ENCODE measurements at regions of chr22 and their contacts with region 1.

Region 1: DNA sequence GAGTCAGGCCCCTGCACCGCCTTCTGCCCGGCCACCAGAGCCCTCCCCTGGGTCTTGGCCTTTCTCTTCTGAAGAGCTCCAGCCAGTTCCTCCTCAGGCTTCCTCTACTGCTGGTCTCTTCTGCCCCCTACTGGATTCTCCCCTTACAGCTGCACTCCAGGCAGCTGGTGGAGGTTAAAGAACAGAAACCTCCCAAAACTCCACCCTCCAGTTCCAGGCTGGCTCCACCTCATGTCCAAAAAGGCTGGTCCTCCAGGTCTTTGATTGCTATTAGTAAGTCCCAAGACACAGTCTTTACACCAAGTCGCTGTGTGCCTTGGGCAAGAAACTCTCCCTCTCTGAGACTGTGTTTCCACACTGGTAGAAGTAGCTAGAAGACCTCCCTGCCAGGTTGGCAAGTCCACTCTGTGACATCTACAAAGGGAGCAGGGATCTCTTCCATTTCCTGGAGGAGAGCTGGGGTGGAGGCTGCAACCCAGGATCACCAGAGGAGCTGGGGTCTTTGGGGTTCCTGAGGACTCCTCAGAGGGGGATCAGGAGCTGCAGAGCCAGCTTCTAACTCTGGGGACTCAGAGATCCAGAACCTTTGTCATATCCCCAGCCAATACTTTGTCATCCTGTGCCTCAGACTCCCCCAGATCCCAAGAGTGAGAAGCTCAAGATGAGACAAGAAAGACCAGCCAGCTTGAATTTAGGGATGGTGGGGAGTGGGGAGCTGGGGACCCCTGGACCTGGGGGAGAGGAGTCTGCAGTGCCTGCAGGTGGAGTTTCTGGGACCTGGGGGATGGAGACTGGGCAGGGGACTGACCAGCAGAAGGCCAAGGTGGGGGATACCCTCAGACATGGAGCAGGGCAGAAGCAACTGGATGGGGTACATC is 3.4 kb upstream of the IGLL5 start:
- DNase-seq: peak; percentile 85
- ATAC-seq: peak; percentile 90
- H3K4me3 Mint-ChIP-seq: no peak overlapping the region
- H3K27ac Mint-ChIP-seq: no peak overlapping the region
- H3K4me1 Mint-ChIP-seq: peaks cover 19% of the 10 kb centered on the region
- H3K27me3 Mint-ChIP-seq: peaks cover 28% of the 10 kb centered on the region

Region 2: DNA sequence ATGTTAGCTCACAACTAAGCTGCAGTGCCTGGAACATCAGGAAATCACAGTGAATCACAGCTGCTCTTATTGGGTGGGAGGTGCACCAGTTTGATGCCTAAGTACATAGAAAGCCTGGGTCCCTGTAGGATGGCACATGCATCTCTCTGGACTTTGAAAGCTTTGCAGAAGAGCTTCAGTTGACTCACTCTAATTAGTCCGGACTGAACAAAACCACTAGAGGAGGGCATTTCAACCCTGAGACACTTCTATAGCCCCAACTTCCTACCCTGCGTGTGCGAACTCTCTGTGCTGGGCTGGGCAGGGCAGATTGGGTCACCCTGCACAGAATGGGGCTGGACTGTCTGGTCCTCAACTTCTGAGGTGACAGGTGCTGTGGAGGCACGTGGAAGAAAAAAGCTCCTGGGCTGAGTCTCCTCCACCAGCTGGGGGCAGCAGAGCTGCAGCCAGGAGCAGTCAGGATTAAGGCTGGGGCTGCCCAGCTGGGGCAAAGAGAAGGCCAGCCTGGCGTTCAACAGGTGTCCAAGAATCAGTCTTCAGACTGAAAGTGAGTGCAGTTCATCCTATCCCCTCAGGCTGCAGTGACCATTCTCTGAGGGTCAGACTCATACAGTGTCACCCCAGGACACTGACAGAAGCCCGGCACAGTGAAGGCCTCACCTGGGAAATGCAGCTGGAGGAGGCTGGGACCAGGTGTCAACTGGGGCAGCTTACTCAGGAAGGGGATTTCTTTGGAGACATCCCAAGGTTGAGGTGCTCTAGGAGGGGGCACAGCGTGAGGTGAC is 217.8 kb before region 1 on chr22:
- CTCF ChIA-PET with region 1: interaction called, 10 read pairs
- POLR2A ChIA-PET with region 1: no interaction called
- DNase-seq: peak; percentile 45
- ATAC-seq: peak; percentile 63
- H3K4me3 Mint-ChIP-seq: no peak overlapping the region
- H3K27ac Mint-ChIP-seq: no peak overlapping the region
- H3K4me1 Mint-ChIP-seq: peaks cover 4% of the 10 kb centered on the region
- H3K27me3 Mint-ChIP-seq: peaks cover 13% of the 10 kb centered on the region

Region 3: DNA sequence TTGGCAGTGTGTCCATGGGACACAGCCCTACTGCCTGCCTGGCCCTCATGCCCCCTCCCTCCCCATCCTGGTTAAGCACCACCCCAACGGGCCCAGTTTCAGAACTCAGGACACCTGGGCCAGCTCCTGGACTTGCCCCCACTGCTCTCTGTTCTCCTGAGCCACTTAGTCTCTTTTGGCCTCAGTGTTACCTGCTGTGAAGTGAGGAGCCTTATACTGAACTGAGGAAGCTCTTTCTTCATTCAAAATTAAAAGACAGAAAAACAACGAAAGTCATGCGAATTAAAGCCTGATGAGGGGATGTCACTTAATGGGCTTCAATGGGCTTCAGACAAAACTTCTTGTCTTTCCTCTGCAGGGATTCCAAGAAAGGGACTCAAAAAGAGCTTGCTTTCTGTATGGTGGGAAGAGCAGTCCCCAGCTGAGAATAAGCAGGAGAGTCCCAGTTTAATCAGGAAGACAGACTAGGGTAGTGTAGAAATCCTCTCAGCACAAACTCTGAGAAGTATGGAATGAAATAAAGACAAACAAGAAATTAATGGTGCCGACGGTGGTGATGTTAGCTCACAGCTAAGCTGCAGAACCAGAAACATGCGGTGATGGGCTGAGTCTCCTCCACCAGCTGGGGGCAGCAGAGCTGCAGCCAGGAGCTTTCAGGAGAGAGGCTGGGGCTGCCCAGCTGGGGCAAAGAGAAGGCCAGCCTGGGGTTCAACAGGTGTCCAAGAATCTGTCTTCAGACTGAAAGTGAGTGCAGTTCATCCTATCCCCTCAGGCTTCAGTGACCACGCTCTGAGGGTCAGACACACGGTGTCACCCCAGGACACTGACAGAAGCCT is 138.8 kb before region 1 on chr22:
- CTCF ChIA-PET with region 1: interaction called, 125 read pairs
- POLR2A ChIA-PET with region 1: no interaction called
- DNase-seq: peak; percentile 57
- ATAC-seq: peak; percentile 74
- H3K4me3 Mint-ChIP-seq: no peak overlapping the region
- H3K27ac Mint-ChIP-seq: no peak overlapping the region
- H3K4me1 Mint-ChIP-seq: no peaks in the 10 kb centered on the region
- H3K27me3 Mint-ChIP-seq: peaks cover 27% of the 10 kb centered on the region

Region 4: DNA sequence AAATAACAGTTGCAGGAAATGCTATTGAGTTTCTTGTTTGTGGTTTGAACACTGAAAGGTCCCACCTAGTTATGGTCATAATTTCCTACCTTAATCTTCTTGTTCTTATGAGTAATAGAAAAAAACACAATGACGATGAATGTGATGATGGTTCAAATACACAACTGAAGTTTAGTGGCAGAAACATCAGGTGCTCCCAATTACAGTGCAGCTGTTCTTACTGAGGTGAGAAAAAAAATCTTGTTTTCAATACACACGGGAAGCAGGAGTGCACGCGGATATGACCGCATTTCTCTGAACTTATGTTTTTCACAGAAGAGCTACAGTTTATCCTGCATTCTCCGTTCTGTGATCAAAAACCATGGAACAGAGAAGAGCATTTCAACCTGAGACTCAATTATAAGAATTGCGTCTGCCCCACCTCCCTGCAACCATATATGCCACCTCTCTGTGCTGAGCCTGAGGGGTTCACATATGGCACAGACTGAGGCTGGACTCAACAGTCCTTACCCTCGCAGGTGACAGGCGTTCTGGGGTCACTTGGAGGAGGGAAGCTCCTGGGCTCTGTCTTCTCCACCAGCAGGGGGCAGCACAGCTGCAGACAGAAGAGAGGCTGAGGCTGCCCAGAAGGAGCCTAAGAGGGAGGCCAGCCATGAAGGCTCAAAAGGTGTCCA is 96.3 kb before region 1 on chr22:
- CTCF ChIA-PET with region 1: interaction called, 184 read pairs
- POLR2A ChIA-PET with region 1: no interaction called
- DNase-seq: peak; percentile 81
- ATAC-seq: peak; percentile 90
- H3K4me3 Mint-ChIP-seq: no peak overlapping the region
- H3K27ac Mint-ChIP-seq: peak overlapping the region; percentile 30
- H3K4me1 Mint-ChIP-seq: peaks cover 25% of the 10 kb centered on the region
- H3K27me3 Mint-ChIP-seq: peaks cover 13% of the 10 kb centered on the region

Region 5: DNA sequence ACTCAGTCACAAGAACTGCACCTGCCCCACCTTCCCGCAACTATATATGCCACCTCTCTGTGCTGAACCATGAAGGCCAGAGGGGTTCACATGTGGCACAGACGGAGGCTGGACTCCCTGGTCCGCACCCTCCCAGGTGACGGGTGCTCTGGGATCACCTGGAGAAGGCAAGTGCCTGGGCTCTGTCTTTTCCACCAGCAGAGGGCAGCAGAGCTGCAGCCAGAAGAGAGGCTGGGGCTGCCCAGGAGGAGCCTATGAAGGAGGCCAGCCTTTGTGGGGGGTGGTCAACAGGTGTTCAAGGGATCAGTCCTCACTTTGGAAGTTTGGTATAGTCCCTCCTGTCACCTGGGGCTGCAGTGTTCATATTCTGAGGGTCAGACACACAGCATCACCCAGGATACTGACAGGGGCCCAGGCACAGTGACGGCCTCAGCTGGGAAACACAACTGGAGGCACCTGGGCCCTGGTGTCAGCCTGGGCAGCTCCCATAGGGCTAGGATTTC is 35.8 kb before region 1 on chr22:
- CTCF ChIA-PET with region 1: interaction called, 77 read pairs
- POLR2A ChIA-PET with region 1: no interaction called
- DNase-seq: peak; percentile 77
- ATAC-seq: peak; percentile 95
- H3K4me3 Mint-ChIP-seq: no peak overlapping the region
- H3K27ac Mint-ChIP-seq: no peak overlapping the region
- H3K4me1 Mint-ChIP-seq: peaks cover 5% of the 10 kb centered on the region
- H3K27me3 Mint-ChIP-seq: peaks cover 24% of the 10 kb centered on the region

Region 6: DNA sequence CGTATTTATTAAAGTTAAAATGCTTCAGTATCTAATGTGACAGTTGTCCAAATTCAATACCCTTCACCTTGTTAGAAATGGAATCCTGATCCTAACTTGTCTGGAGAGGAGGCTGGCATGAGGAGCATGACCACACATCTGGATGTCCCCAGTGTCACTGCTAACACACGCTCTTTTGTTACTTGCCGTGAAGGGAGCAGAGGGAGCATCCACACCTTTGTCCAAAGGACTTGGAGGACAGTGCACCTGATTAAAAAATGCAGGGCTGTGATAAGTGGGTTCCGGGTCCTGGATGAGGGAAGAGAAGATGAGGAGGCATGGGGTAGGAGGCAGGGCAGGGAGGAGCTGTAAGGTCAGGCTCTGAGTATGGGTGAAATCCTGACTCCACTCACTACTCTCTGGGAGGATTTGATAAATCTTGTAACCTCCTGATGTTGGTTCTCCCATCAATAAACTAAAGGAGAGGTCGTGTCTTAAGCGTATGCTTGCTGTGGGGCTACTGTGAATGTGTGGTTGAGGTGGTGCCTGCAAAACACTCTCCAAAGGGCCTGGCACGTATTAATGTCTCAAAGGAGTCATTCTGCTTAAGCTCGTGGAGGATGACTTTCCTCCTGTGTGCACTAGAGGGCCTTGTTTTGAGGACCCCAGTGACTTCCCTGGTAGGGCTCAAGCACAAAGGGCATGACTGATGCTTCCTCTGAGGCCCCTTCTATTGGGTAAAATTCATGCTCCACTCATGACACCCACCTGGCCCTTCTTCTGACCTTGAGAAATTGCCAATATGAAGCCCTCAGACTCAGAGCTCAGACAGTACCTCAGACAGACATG is 13.5 kb before region 1 on chr22:
- CTCF ChIA-PET with region 1: interaction called, 15 read pairs
- POLR2A ChIA-PET with region 1: no interaction called
- DNase-seq: peak; percentile 27
- ATAC-seq: no peak
- H3K4me3 Mint-ChIP-seq: no peak overlapping the region
- H3K27ac Mint-ChIP-seq: no peak overlapping the region
- H3K4me1 Mint-ChIP-seq: peaks cover 13% of the 10 kb centered on the region
- H3K27me3 Mint-ChIP-seq: peaks cover 38% of the 10 kb centered on the region

Region 7: DNA sequence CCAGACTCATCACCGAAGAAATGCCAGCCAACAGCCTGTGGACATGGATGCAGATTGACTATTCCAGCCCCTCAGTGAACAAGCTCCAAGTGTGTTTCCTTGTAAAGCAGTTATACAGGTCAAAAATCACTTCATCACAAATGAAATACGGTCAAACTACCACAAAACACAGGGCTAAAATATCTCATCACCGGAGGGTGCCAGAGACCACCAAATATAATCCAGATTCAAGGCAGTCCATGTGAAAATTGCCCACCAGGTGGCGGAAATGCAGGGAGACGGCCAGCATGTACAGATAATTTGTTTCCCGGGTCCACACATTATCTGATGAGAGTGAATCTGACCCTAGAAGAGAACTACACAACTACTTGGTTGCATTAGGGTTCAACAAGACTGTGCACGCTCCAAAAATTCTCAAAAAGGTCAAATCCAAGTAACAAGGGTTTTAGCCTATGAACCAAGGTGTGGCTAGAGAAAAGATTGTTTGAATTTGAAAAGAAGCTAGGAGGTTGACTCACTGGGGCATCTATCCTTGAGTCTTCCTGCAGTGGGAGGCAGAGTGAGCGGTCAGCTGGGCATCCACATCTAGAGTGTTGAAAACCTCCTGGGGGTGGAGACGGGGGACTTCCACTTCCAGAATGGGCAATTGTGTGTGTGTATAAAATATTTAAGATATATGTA is 75.0 kb after region 1 on chr22:
- CTCF ChIA-PET with region 1: interaction called, 42 read pairs
- POLR2A ChIA-PET with region 1: no interaction called
- DNase-seq: peak; percentile 86
- ATAC-seq: peak; percentile 78
- H3K4me3 Mint-ChIP-seq: no peak overlapping the region
- H3K27ac Mint-ChIP-seq: no peak overlapping the region
- H3K4me1 Mint-ChIP-seq: no peaks in the 10 kb centered on the region
- H3K27me3 Mint-ChIP-seq: peaks cover 34% of the 10 kb centered on the region

Measured in activated CD8-positive, alpha-beta T cell treated with anti-CD3 and anti-CD28 coated beads, Interleukin-2, amount 10 ng/mL, durations not matched to agents 7 days and 5 days (primary cell).